ENCODE measurements at regions of chr10 and their contacts with region 1.

Region 1: GRCh38 chr10:74081192-74081803 is 69.3 kb downstream of the AP3M1 start:
- DNase-seq: peak; percentile 64
- ATAC-seq: no peak
- H3K4me3 Mint-ChIP-seq: no peak overlapping the region
- H3K27ac Mint-ChIP-seq: peak overlapping the region; percentile 17
- H3K4me1 Mint-ChIP-seq: peaks cover 41% of the 10 kb centered on the region
- H3K27me3 Mint-ChIP-seq: no peaks in the 10 kb centered on the region

Region 2: GRCh38 chr10:73956476-73957359 is 124.6 kb before region 1 on chr10:
- CTCF ChIA-PET with region 1: interaction called, 19 read pairs
- POLR2A ChIA-PET with region 1: no interaction called
- DNase-seq: peak; percentile 62
- ATAC-seq: peak; percentile 76
- H3K4me3 Mint-ChIP-seq: peak overlapping the region; percentile 60
- H3K27ac Mint-ChIP-seq: peak overlapping the region; percentile 89
- H3K4me1 Mint-ChIP-seq: peaks cover 53% of the 10 kb centered on the region
- H3K27me3 Mint-ChIP-seq: peaks cover 2% of the 10 kb centered on the region

Region 3: DNA sequence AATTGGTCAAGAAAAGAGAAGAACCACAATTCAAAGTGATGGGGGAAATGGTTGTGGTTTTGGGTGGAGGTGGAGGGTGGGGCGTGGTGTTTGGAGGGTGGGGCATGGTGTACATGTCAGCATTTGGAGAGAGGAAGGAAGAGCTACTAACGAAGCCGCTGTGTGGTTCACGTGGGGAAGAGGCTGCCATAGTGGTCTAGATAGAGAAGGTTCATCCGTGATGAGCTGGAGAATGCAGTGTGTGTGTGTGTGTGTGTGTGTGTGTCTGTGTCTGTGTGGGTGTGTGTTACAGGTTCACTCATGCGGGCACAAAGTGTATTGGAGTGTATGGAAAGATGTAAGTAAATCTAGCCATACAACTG is 89.4 kb before region 1 on chr10:
- CTCF ChIA-PET with region 1: interaction called, 16 read pairs
- POLR2A ChIA-PET with region 1: no interaction called
- DNase-seq: peak; percentile 96
- ATAC-seq: peak; percentile 100
- H3K4me3 Mint-ChIP-seq: peak overlapping the region; percentile 1
- H3K27ac Mint-ChIP-seq: peak overlapping the region; percentile 74
- H3K4me1 Mint-ChIP-seq: peaks cover 51% of the 10 kb centered on the region
- H3K27me3 Mint-ChIP-seq: peaks cover 7% of the 10 kb centered on the region

Region 4: DNA sequence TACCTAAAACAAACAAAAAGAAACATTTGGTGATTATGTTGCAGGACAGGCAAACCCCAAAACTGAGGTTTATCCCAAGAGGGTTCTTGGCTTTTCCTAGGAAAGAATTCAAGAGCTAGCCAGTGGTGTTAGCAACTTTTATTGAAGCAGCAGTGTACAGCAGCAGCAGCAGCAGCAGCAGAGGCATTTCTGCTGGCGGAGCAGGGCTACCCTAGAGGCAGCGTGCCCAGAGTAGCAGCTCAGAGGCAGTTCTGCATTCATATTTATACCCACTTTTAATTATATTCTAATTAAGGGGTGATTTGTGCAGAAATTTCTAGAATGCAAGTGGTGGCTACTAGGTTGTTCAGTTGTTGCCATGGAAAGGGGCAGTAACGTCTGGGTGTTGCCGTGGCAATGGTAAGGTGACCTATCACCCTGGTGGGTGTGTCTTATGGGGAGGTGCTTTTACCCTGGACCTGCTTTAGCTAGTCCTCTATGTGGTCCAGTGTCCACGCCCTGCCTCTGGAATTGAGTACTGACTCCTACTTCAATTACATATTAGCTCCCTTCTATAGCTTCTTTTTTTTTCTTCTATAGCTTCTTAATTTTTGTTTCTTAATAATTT is 29.5 kb before region 1 on chr10:
- CTCF ChIA-PET with region 1: interaction called, 18 read pairs
- POLR2A ChIA-PET with region 1: no interaction called
- DNase-seq: no peak
- ATAC-seq: no peak
- H3K4me3 Mint-ChIP-seq: no peak overlapping the region
- H3K27ac Mint-ChIP-seq: no peak overlapping the region
- H3K4me1 Mint-ChIP-seq: peaks cover 21% of the 10 kb centered on the region
- H3K27me3 Mint-ChIP-seq: no peaks in the 10 kb centered on the region

Region 5: GRCh38 chr10:74058658-74059057 is 22.6 kb before region 1 on chr10:
- CTCF ChIA-PET with region 1: interaction called, 18 read pairs
- POLR2A ChIA-PET with region 1: no interaction called
- DNase-seq: peak; percentile 42
- ATAC-seq: peak; percentile 43
- H3K4me3 Mint-ChIP-seq: no peak overlapping the region
- H3K27ac Mint-ChIP-seq: peak overlapping the region; percentile 51
- H3K4me1 Mint-ChIP-seq: peaks cover 42% of the 10 kb centered on the region
- H3K27me3 Mint-ChIP-seq: no peaks in the 10 kb centered on the region

Region 6: DNA sequence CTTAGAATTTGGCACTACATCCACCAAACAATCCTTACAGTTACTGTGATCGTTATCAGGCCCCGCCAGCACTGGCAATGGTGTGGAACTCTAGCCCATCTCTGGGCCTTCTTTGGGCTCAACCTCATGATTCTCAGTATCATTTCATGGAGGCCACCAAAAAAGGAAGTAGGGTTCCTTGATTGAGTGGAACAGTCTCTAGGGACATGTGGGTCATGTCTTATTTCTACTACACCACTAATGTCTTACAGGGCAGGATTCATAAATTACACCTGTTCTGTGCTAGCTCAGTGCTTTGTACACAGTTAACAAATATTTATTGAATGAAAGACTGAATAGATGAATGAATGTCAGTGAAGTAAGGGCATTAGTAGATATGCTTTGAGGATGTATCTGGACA is 15.5 kb after region 1 on chr10:
- CTCF ChIA-PET with region 1: interaction called, 18 read pairs
- POLR2A ChIA-PET with region 1: no interaction called
- DNase-seq: no peak
- ATAC-seq: no peak
- H3K4me3 Mint-ChIP-seq: no peak overlapping the region
- H3K27ac Mint-ChIP-seq: no peak overlapping the region
- H3K4me1 Mint-ChIP-seq: peaks cover 4% of the 10 kb centered on the region
- H3K27me3 Mint-ChIP-seq: no peaks in the 10 kb centered on the region

Region 7: GRCh38 chr10:74103560-74104248 is 22.4 kb after region 1 on chr10:
- CTCF ChIA-PET with region 1: interaction called, 18 read pairs
- POLR2A ChIA-PET with region 1: interaction called, 8 read pairs
- DNase-seq: no peak
- ATAC-seq: no peak
- H3K4me3 Mint-ChIP-seq: no peak overlapping the region
- H3K27ac Mint-ChIP-seq: no peak overlapping the region
- H3K4me1 Mint-ChIP-seq: peaks cover 4% of the 10 kb centered on the region
- H3K27me3 Mint-ChIP-seq: no peaks in the 10 kb centered on the region

Measured in activated CD8-positive, alpha-beta T cell treated with anti-CD3 and anti-CD28 coated beads, Interleukin-2, amount 10 ng/mL, durations not matched to agents 7 days and 5 days (primary cell).